Spleen (tissue), 13 donors: ENCODE measurements at regions of chr12 and their contacts with region 1.

Region 1: DNA sequence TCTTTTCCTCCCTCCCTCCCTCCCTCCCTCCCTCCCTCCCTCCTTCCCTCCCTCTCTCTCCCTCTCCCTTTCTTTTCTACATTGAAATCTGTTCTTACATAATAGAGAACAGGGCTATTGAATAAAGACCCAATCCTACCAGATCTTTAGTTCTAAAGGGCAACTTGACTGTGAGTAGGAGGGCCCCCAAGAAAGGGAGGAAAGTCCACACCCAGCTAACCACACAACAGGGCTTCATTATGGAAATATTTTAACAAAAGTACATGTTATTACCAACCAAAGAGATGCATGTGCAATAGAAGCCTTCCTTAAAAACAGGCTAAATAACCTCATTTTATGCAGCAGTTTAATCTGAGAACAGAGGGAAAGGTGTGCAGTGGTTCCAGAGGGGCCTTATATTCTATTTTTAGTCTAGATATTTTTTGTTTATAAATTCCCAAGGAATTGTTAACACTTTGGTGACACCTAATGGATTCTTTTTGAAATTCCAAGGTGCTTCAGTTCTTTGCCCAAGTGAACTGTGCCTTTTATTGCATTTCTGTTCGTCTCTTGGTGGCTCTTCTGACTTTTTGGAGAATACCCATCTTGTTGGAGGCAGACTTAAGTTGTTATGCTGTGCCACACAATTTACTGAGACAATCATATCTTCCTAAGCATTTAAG is 63.0 kb downstream of the GNS start:
- DNase-seq: no peak
- H3K4me3 ChIP-seq: no peak overlapping the region
- H3K27ac ChIP-seq: peak overlapping the region in 6 of 8 donors; percentile 36 to 57 (median 52)
- H3K4me1 ChIP-seq: peaks cover 7 to 99% (median 52%) of the 10 kb centered on the region in 6 donors
- H3K27me3 ChIP-seq: no peaks in the 10 kb centered on the region
- CTCF ChIP-seq: peak in 6 of 11 experiments; percentile 7 to 50 (median 20)
- POLR2A ChIP-seq: no peak

Region 2: DNA sequence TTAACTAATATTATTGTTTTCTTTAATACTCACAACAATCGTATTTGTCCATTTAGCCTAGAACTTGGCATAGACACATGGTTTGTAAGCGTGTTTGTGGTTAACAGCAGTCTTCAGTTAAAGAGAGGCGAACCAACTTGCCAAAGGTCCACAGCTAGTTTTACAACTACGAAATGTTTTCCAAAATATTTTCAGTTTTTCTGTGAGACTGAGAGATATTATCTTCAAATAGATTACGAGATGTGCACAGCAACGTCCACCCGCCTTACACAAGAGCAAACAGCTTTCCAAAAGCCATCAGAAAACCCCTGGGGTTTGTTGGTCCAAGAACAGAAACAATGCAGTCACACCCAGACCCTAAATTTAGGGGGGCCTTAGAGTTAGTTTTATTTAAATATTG is 144.5 kb before region 1 on chr12:
- intact Hi-C with region 1: loop called (anchors 2 kb)
- DNase-seq: no peak
- H3K4me3 ChIP-seq: no peak overlapping the region
- H3K27ac ChIP-seq: no peak overlapping the region
- H3K4me1 ChIP-seq: peaks cover 0 to 11% (median 5%) of the 10 kb centered on the region in 6 donors
- H3K27me3 ChIP-seq: no peaks in the 10 kb centered on the region
- CTCF ChIP-seq: no peak
- POLR2A ChIP-seq: no peak